OCI-LY7 (cell line): ENCODE measurements at regions of chr7 and their contacts with region 1.

Region 1: GRCh38 chr7:6637544-6638229 is 569 bp downstream of the ZNF316 start:
- DNase-seq: peak; percentile 86
- H3K4me3 ChIP-seq: peak overlapping the region; percentile 79
- H3K27ac ChIP-seq: peak overlapping the region; percentile 12
- H3K4me1 ChIP-seq: peaks cover 12% of the 10 kb centered on the region
- CTCF ChIP-seq: peak; percentile 74

Region 2: GRCh38 chr7:6516387-6516983 is 121.2 kb before region 1 on chr7:
- CTCF ChIA-PET with region 1: no interaction called
- POLR2A ChIA-PET with region 1: no interaction called
- intact Hi-C with region 1: loop called (anchors 1 kb)
- DNase-seq: peak; percentile 78
- H3K4me3 ChIP-seq: peak overlapping the region; percentile 24
- H3K27ac ChIP-seq: no peak overlapping the region
- H3K4me1 ChIP-seq: peaks cover 15% of the 10 kb centered on the region
- CTCF ChIP-seq: peak; percentile 92

Region 3: GRCh38 chr7:6651851-6652445 is 14.3 kb after region 1 on chr7:
- CTCF ChIA-PET with region 1: no interaction called
- POLR2A ChIA-PET with region 1: no interaction called
- intact Hi-C with region 1: no loop called
- DNase-seq: no peak
- H3K4me3 ChIP-seq: no peak overlapping the region
- H3K27ac ChIP-seq: no peak overlapping the region
- H3K4me1 ChIP-seq: no peaks in the 10 kb centered on the region
- CTCF ChIP-seq: no peak

Region 4: DNA sequence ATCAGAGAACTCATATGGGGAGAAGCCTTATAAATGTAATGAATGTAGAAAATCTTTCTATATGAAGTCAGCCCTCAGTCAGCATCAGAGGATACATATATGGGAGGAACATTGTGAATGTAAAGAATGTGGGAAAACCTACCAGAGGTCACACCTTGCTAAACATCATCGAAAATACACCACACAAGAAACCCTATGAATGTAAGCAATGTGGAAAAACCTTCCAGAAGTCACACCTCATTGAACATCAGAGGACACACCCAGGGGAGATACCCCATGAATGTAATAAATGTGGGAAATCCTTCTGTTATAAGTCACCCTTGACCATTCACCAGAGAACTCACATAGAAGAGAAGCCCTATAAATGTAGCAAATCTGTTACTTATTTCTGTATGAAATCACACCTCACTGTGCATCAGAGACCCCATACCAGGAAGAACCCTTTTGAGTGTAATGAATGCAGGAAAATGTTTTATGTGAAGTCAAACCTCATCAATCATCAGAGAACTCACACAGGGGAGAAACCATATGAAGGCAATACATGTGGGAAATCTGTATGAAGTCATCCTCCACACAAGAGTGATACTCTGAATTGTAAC is 38.2 kb after region 1 on chr7:
- CTCF ChIA-PET with region 1: no interaction called
- POLR2A ChIA-PET with region 1: no interaction called
- intact Hi-C with region 1: no loop called
- DNase-seq: no peak
- H3K4me3 ChIP-seq: no peak overlapping the region
- H3K27ac ChIP-seq: no peak overlapping the region
- H3K4me1 ChIP-seq: no peaks in the 10 kb centered on the region
- CTCF ChIP-seq: no peak

Region 5: DNA sequence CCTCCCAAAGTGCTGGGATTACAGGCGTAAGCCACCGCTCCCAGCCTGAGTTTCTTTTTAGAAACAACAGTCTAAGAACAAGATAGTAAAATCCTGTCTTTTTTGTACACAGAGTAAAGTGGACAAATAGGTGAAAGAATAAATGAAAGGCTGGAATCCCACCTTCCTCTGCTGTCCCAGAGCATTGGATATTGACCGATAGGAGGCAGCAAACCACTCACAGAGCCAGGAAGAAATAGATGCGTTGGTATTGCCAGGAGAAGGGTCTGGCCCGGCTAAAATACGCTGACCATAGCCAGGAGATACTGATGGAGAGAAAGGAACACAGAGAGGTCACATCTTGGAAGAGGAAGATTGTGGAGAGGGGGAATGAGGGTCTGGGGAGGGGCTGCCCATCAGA is 80.4 kb after region 1 on chr7:
- CTCF ChIA-PET with region 1: no interaction called
- POLR2A ChIA-PET with region 1: no interaction called
- intact Hi-C with region 1: no loop called
- DNase-seq: no peak
- H3K4me3 ChIP-seq: no peak overlapping the region
- H3K27ac ChIP-seq: no peak overlapping the region
- H3K4me1 ChIP-seq: no peaks in the 10 kb centered on the region
- CTCF ChIP-seq: no peak